Dendritic cell treated with granulocyte-macrophage colony-stimulating factor and Interleukin-4, amounts not matched to agents 40 ng/mL and 50 ng/mL, for 4 days (primary cell): ENCODE measurements at regions of chr3 and their contacts with region 1.

Region 1: GRCh38 chr3:11514191-11514821 is 129.4 kb downstream of the VGLL4 start:
- H3K4me3 Mint-ChIP-seq: peak overlapping the region; percentile 57
- H3K27ac Mint-ChIP-seq: peak overlapping the region; percentile 77
- H3K4me1 Mint-ChIP-seq: peaks cover 70% of the 10 kb centered on the region
- H3K27me3 Mint-ChIP-seq: no peaks in the 10 kb centered on the region

Region 2: DNA sequence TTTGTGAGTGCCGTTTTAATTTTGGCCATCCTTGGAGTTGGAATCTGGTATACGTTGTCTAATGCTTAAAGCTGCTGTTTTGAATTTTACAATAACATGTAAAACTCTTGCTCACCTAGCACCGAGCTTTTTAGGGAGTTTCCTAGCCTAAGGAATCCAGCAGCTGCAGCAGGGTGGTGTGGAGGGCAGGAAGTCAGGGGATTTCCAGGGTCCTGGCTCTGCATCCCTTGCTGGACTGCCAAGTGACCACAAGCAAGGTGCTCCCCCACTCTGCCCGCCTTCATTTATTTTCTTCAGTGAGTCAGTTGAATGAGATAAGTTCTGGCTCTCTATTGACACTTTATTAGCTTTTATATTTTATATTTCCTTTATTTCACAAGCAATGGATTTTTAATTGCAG is 128.4 kb before region 1 on chr3:
- intact Hi-C with region 1: loop called (anchors 10 kb)
- H3K4me3 Mint-ChIP-seq: no peak overlapping the region
- H3K27ac Mint-ChIP-seq: no peak overlapping the region
- H3K4me1 Mint-ChIP-seq: peaks cover 12% of the 10 kb centered on the region
- H3K27me3 Mint-ChIP-seq: no peaks in the 10 kb centered on the region

Region 3: GRCh38 chr3:12454076-12454815 is 939.9 kb after region 1 on chr3:
- intact Hi-C with region 1: no loop called
- H3K4me3 Mint-ChIP-seq: no peak overlapping the region
- H3K27ac Mint-ChIP-seq: no peak overlapping the region
- H3K4me1 Mint-ChIP-seq: peaks cover 37% of the 10 kb centered on the region
- H3K27me3 Mint-ChIP-seq: no peaks in the 10 kb centered on the region